ENCODE measurements at regions of chr4 and their contacts with region 1.

Region 1: GRCh38 chr4:185096032-185096653 is 46.9 kb upstream of the SLC25A4 start:
- DNase-seq: peak in 5 of 9 experiments; percentile 20 to 48 (median 24)
- ATAC-seq: no peak
- H3K4me3 ChIP-seq: no peak overlapping the region
- H3K4me3 Mint-ChIP-seq: no peak overlapping the region
- H3K27ac ChIP-seq: no peak overlapping the region
- H3K27ac Mint-ChIP-seq: no peak overlapping the region
- H3K4me1 ChIP-seq: no peaks in the 10 kb centered on the region
- H3K4me1 Mint-ChIP-seq: no peaks in the 10 kb centered on the region
- H3K27me3 ChIP-seq: peaks cover 0 to 2% of the 10 kb centered on the region in 2 experiments
- H3K27me3 Mint-ChIP-seq: peaks cover 17% of the 10 kb centered on the region
- CTCF ChIP-seq: peak; percentile 59

Region 2: DNA sequence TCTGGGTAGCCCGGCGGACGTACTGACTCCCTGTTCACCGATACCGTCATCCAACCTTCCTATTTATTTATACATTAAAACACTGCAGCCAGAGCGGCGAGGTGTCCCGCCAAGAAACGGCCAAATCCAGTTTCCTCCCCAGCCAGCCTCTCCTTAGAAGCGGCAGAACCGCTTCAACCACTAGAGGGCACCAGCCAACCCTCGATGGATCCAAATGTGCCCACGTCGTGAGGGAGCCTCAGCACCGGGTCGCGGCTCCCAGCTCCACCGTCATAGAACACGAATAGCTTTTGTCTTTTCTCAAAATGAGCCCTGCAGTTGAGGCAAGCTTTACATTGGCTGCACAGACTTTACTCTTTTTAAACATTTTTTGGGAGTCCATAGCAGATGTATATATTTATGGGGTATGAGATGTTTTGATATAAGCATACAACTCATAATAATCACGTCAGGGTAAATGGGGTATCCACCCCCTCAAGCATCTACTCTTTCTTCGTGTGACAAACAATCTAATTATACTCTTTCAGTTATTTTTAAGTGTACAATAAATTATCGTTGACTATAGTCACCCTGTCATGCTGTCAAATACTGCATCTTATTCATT is 90.8 kb before region 1 on chr4:
- CTCF ChIA-PET with region 1: interaction called, 4 read pairs
- POLR2A ChIA-PET with region 1: no interaction called
- intact Hi-C with region 1: loop called in 1 of 2 experiments (anchors 10 kb)
- DNase-seq: peak; percentile 50 to 82 (median 76)
- ATAC-seq: peak; percentile 96
- H3K4me3 ChIP-seq: no peak overlapping the region
- H3K4me3 Mint-ChIP-seq: peak overlapping the region; percentile 50
- H3K27ac ChIP-seq: no peak overlapping the region
- H3K27ac Mint-ChIP-seq: no peak overlapping the region
- H3K4me1 ChIP-seq: no peaks in the 10 kb centered on the region
- H3K4me1 Mint-ChIP-seq: peaks cover 4% of the 10 kb centered on the region
- H3K27me3 ChIP-seq: peaks cover 2 to 6% of the 10 kb centered on the region in 2 experiments
- H3K27me3 Mint-ChIP-seq: peaks cover 51% of the 10 kb centered on the region
- CTCF ChIP-seq: peak; percentile 88

Region 3: DNA sequence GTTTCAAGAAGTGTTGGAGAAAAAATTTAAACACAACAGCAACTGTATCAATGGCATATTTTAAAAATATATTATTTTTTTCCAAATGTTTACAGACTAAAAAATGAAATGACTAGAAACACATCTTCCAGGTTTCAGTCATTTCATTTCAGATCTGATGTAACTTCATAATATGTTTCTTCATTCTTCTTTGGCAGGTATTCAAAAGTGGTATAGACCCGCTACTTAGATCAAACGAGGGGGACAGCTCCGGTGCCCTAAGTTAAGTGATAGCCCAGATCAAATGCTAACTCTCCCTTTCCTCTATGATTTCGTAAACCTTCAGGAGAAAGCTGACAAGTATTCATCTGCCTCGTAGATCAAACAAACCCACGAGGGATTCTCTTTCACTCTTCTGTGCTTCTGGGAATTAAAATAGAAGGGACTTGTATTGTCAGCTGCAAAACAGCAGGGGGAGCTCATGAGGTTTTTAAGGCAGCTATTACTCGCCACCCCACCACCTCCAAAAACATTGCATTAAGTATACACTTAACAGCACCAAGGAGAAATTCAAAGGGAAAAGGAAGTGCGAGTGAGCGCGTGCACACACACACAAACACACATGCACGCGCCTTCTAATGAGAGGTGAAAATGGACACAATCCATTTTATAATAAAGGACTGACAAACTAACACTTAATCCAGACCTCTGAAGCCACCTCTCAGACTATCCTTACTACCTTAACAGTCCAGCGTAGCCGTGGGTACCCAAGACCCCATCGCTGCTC is 56.5 kb before region 1 on chr4:
- CTCF ChIA-PET with region 1: interaction called, 8 read pairs
- POLR2A ChIA-PET with region 1: no interaction called
- intact Hi-C with region 1: loop called (anchors 5 kb)
- DNase-seq: peak; percentile 9 to 72 (median 47)
- ATAC-seq: peak; percentile 77
- H3K4me3 ChIP-seq: no peak overlapping the region
- H3K4me3 Mint-ChIP-seq: peak overlapping the region; percentile 44
- H3K27ac ChIP-seq: no peak overlapping the region
- H3K27ac Mint-ChIP-seq: no peak overlapping the region
- H3K4me1 ChIP-seq: peaks cover 6% of the 10 kb centered on the region
- H3K4me1 Mint-ChIP-seq: peaks cover 4% of the 10 kb centered on the region
- H3K27me3 ChIP-seq: no peaks in the 10 kb centered on the region
- H3K27me3 Mint-ChIP-seq: peaks cover 16% of the 10 kb centered on the region
- CTCF ChIP-seq: peak; percentile 86